ENCODE measurements at regions of chr9 and their contacts with region 1.

Region 1: DNA sequence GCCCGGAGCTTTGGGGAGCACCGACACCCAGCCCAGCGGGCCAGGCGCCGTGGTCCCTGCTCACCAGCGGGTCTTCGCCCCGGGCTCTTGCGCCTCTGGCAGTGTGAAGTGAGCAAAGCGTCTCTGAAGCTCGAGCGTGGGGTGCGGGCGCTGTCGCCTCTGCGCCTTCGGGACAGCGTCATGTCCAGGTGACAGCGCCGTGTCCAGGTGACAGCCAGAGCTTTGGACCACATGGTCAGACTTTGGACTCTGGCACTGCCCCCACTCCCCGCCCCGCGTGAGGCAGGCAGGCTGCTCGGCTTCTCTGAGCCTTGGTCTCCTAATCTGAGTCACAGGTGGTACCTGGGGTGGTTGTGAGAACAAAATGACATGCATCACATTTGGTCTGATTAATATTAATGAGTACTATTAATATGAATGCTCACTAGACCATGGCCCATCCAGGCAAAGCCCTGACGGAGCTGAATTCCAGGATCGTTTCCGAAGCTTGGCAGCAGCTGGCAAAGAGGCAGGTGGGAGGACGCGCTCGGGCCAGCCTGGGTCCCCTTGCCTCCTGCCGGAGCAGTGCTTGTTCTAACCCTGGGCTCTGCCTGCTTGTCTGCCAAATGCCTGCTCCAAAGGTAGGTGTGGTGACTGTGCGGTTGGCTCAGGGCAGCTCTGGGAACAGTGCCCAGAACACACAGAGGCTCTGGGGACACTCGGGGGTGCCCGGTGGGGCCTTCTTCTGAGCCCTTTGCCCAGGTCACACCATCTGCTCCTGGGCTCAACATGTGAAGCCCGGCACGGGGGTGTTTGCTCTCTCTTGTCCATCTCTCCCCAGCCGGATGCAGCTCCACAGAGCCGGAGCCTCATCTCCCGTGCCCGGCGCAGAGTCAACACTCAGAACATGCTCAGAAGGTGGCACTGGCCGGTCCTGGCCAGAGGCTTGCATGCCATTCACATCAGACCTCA is 157.1 kb downstream of the OLFM1 start:
- DNase-seq: no peak
- H3K4me3 ChIP-seq: no peak overlapping the region
- H3K27ac ChIP-seq: no peak overlapping the region
- H3K4me1 ChIP-seq: peaks cover 0 to 3% (median 0%) of the 10 kb centered on the region in 4 donors
- H3K27me3 ChIP-seq: peaks cover 0 to 72% of the 10 kb centered on the region in 2 donors
- CTCF ChIP-seq: no peak

Region 2: GRCh38 chr9:133919253-133920115 is 1325.1 kb before region 1 on chr9:
- intact Hi-C with region 1: loop called (anchors 5 kb)
- DNase-seq: no peak
- H3K4me3 ChIP-seq: no peak overlapping the region
- H3K27ac ChIP-seq: no peak overlapping the region
- H3K4me1 ChIP-seq: peaks cover 0 to 22% (median 12%) of the 10 kb centered on the region in 4 donors
- H3K27me3 ChIP-seq: no peaks in the 10 kb centered on the region
- CTCF ChIP-seq: no peak

Region 3: GRCh38 chr9:134871697-134872340 is 372.7 kb before region 1 on chr9:
- intact Hi-C with region 1: no loop called
- DNase-seq: no peak
- H3K4me3 ChIP-seq: no peak overlapping the region
- H3K27ac ChIP-seq: no peak overlapping the region
- H3K4me1 ChIP-seq: no peaks in the 10 kb centered on the region
- H3K27me3 ChIP-seq: peaks cover 0 to 21% of the 10 kb centered on the region in 2 donors
- CTCF ChIP-seq: no peak

Region 4: GRCh38 chr9:135320943-135321629 is 76.5 kb after region 1 on chr9:
- intact Hi-C with region 1: no loop called
- DNase-seq: no peak
- H3K4me3 ChIP-seq: no peak overlapping the region
- H3K27ac ChIP-seq: no peak overlapping the region
- H3K4me1 ChIP-seq: no peaks in the 10 kb centered on the region
- H3K27me3 ChIP-seq: peaks cover 0 to 16% of the 10 kb centered on the region in 2 donors
- CTCF ChIP-seq: no peak